ENCODE measurements at regions of chr12 and their contacts with region 1.

Region 1: DNA sequence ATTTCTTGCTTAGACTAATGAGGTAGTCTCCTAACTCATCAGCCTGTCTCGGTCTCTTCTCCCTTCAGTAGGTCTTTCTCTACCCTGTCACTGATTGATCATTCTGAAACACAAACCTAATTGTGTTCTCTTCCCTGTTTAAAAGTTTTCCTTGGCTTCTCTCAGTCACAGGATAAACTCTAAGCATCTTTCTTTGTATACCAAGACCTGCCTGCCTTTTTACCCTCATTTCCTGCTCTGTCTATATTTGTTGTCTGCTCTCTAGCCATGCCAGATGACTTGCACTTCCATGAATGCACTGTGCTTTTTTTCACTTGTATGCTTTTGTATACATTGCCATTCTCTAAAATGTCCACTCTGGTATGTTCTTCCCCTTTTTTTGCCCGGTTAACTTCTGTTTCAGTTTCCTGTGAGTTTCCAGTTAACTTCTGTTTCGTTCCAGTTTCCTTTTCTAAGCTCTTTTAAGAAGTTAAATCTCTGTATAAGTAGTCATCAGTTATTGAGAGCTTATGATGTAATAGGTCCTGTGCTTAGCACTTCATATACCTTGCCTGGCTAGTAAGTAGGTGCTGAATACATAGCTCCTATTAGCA is 12.8 kb downstream of the DIP2B start:
- DNase-seq: no peak
- ATAC-seq: peak in 6 of 8 donors; percentile 37 to 56 (median 50)
- H3K4me3 ChIP-seq: peak overlapping the region in 1 of 10 donors; percentile 16
- H3K27ac ChIP-seq: peak overlapping the region in 7 of 10 donors; percentile 0 to 82 (median 49)
- H3K4me1 ChIP-seq: peaks cover 5 to 99% (median 68%) of the 10 kb centered on the region in 9 donors
- H3K27me3 ChIP-seq: no peaks in the 10 kb centered on the region
- CTCF ChIP-seq: no peak

Region 2: DNA sequence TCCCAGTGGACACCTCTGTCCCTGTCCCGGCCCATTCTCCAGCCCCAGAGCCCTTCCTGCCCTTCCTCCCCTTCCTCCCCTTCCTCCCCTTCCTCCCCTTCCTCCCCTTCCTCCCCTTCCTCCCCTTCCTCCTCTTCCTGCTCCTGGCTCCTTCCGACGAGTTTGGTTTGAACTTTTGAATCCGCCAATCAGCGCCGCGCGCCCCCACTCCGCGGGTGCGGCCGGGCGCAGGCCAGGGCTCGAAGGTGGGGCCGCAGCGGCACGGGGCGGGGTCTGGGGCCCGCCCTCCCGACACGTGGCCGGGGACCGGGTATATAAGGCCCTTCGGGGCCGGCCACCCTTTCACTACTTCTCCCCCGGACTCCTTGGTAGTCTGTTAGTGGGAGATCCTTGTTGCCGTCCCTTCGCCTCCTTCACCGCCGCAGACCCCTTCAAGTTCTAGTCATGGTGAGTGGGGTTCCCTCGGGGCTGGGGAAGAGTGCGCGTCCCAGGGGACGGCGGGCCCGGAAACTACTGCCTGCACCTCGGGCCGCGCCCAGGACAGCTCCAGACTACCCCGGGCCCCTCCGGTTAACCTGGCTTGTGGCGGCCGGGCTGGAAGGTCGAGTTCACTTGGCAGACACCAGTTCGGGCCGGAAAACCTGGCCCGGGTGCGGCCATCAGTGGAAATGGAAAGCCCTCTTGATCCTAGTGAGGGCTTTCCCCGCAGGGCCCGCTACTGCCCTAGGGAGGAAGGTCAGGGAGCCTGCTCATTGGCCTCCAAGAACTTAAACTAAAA is 1252.6 kb before region 1 on chr12 and contains the start of gene TUBA1C:
- intact Hi-C with region 1: no loop called
- DNase-seq: peak; percentile 90 to 95
- ATAC-seq: peak; percentile 95 to 98 (median 97)
- H3K4me3 ChIP-seq: peak within 1 kb of the TSS; percentile 67 to 93 (median 78)
- H3K27ac ChIP-seq: peak within 1 kb of the TSS; percentile 70 to 99 (median 92)
- H3K4me1 ChIP-seq: peaks cover 0 to 80% (median 23%) of the 10 kb centered on the region in 9 donors
- H3K27me3 ChIP-seq: no peaks in the 10 kb centered on the region
- CTCF ChIP-seq: no peak
- total RNA-seq, gene TUBA1C: 25.9 to 106 (median 53.1) TPM

Region 3: GRCh38 chr12:50326636-50327284 is 190.8 kb before region 1 on chr12:
- intact Hi-C with region 1: no loop called
- DNase-seq: no peak
- ATAC-seq: no peak
- H3K4me3 ChIP-seq: no peak overlapping the region
- H3K27ac ChIP-seq: no peak overlapping the region
- H3K4me1 ChIP-seq: peaks cover 0 to 16% (median 5%) of the 10 kb centered on the region in 9 donors
- H3K27me3 ChIP-seq: no peaks in the 10 kb centered on the region
- CTCF ChIP-seq: no peak

Region 4: GRCh38 chr12:50425589-50426258 is 91.8 kb before region 1 on chr12:
- intact Hi-C with region 1: no loop called
- DNase-seq: no peak
- ATAC-seq: peak in 3 of 8 donors; percentile 27 to 37 (median 37)
- H3K4me3 ChIP-seq: no peak overlapping the region
- H3K27ac ChIP-seq: peak overlapping the region in 2 of 10 donors; percentile 9 to 18
- H3K4me1 ChIP-seq: peaks cover 0 to 17% (median 13%) of the 10 kb centered on the region in 9 donors
- H3K27me3 ChIP-seq: no peaks in the 10 kb centered on the region
- CTCF ChIP-seq: no peak

Region 5: DNA sequence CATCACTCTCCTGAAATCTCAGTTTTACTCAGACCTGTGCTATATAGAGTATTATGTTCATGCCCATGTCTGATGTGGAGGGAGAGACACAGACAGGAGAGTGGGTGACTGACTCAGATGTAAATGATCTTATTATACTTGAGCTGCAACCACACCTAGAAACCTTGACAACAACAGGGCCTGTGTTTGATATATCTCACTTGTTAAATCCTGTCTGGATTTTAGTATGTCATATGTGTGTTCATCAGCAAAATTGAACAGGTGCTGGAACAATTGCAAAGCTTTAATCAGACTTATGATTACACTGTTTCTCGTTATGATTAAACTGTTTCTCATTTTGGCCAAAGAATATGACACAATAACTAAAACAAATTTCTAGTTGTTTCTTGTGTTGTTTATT is 24.9 kb after region 1 on chr12:
- intact Hi-C with region 1: loop called in 1 of 10 experiments (anchors 2 kb)
- DNase-seq: no peak
- ATAC-seq: peak in 1 of 8 donors; percentile 39
- H3K4me3 ChIP-seq: no peak overlapping the region
- H3K27ac ChIP-seq: no peak overlapping the region
- H3K4me1 ChIP-seq: peaks cover 0 to 38% (median 10%) of the 10 kb centered on the region in 9 donors
- H3K27me3 ChIP-seq: no peaks in the 10 kb centered on the region
- CTCF ChIP-seq: no peak

Region 6: GRCh38 chr12:50555471-50555885 is 37.9 kb after region 1 on chr12:
- intact Hi-C with region 1: loop called in 1 of 10 experiments (anchors 5 kb)
- DNase-seq: no peak
- ATAC-seq: no peak
- H3K4me3 ChIP-seq: no peak overlapping the region
- H3K27ac ChIP-seq: no peak overlapping the region
- H3K4me1 ChIP-seq: peaks cover 0 to 25% (median 5%) of the 10 kb centered on the region in 9 donors
- H3K27me3 ChIP-seq: no peaks in the 10 kb centered on the region
- CTCF ChIP-seq: no peak

Measured in heart right ventricle (tissue), 16 donors.